ENCODE measurements at regions of chr7 and their contacts with region 1.

Region 1: GRCh38 chr7:97835296-97836138 is 36.7 kb downstream of the ASNS start:
- DNase-seq: peak; percentile 68
- ATAC-seq: peak; percentile 51
- H3K4me3 ChIP-seq: no peak overlapping the region
- H3K4me3 Mint-ChIP-seq: no peak overlapping the region
- H3K27ac ChIP-seq: no peak overlapping the region
- H3K27ac Mint-ChIP-seq: no peak overlapping the region
- H3K4me1 ChIP-seq: no peaks in the 10 kb centered on the region
- H3K4me1 Mint-ChIP-seq: no peaks in the 10 kb centered on the region
- H3K27me3 ChIP-seq: peaks cover 0 to 4% (median 3%) of the 10 kb centered on the region in 4 experiments
- H3K27me3 Mint-ChIP-seq: peaks cover 47% of the 10 kb centered on the region
- CTCF ChIP-seq: peak; percentile 92

Region 2: GRCh38 chr7:97693586-97693985 is 141.9 kb before region 1 on chr7:
- CTCF ChIA-PET with region 1: no interaction called
- POLR2A ChIA-PET with region 1: no interaction called
- intact Hi-C with region 1: no loop called
- DNase-seq: no peak
- ATAC-seq: no peak
- H3K4me3 ChIP-seq: no peak overlapping the region
- H3K4me3 Mint-ChIP-seq: no peak overlapping the region
- H3K27ac ChIP-seq: no peak overlapping the region
- H3K27ac Mint-ChIP-seq: no peak overlapping the region
- H3K4me1 ChIP-seq: no peaks in the 10 kb centered on the region
- H3K4me1 Mint-ChIP-seq: no peaks in the 10 kb centered on the region
- H3K27me3 ChIP-seq: no peaks in the 10 kb centered on the region
- H3K27me3 Mint-ChIP-seq: no peaks in the 10 kb centered on the region
- CTCF ChIP-seq: no peak

Region 3: GRCh38 chr7:97819161-97819560 is 16.4 kb before region 1 on chr7:
- CTCF ChIA-PET with region 1: interaction called, 10 read pairs
- POLR2A ChIA-PET with region 1: no interaction called
- intact Hi-C with region 1: no loop called
- DNase-seq: no peak
- ATAC-seq: no peak
- H3K4me3 ChIP-seq: no peak overlapping the region
- H3K4me3 Mint-ChIP-seq: no peak overlapping the region
- H3K27ac ChIP-seq: no peak overlapping the region
- H3K27ac Mint-ChIP-seq: no peak overlapping the region
- H3K4me1 ChIP-seq: no peaks in the 10 kb centered on the region
- H3K4me1 Mint-ChIP-seq: no peaks in the 10 kb centered on the region
- H3K27me3 ChIP-seq: no peaks in the 10 kb centered on the region
- H3K27me3 Mint-ChIP-seq: peaks cover 5% of the 10 kb centered on the region
- CTCF ChIP-seq: no peak

Region 4: DNA sequence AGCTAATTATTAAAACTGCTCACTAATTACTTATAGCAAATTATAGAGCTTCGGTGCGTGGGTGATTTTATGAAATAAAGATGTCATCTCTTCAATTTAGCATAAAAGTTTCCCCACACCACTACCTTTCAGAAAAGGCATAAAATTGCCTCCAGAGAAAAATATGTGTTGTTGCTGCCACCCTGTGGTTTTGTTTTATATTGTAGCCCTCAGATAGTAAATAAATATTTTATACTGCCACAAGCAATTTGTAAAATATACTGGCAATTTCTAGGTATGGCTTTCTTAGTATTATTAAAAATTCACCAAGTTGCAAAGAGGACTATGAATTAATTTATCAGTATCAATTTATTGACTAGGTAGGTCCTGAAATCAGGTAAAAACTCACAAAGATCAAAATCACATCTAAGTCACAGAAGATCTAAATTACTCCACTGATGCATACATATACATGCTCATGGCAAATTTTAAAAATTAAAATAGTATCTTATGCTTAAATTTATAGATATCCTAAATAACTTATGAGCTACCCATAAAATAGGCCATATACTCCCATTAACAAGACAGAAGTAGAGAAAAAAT is 10.2 kb after region 1 on chr7:
- CTCF ChIA-PET with region 1: interaction called, 26 read pairs
- POLR2A ChIA-PET with region 1: no interaction called
- intact Hi-C with region 1: no loop called
- DNase-seq: peak; percentile 20
- ATAC-seq: no peak
- H3K4me3 ChIP-seq: no peak overlapping the region
- H3K4me3 Mint-ChIP-seq: no peak overlapping the region
- H3K27ac ChIP-seq: no peak overlapping the region
- H3K27ac Mint-ChIP-seq: no peak overlapping the region
- H3K4me1 ChIP-seq: no peaks in the 10 kb centered on the region
- H3K4me1 Mint-ChIP-seq: no peaks in the 10 kb centered on the region
- H3K27me3 ChIP-seq: no peaks in the 10 kb centered on the region
- H3K27me3 Mint-ChIP-seq: peaks cover 3% of the 10 kb centered on the region
- CTCF ChIP-seq: peak; percentile 68